AG04450 (cell line): ENCODE measurements at regions of chr12 and their contacts with region 1.

Region 1: DNA sequence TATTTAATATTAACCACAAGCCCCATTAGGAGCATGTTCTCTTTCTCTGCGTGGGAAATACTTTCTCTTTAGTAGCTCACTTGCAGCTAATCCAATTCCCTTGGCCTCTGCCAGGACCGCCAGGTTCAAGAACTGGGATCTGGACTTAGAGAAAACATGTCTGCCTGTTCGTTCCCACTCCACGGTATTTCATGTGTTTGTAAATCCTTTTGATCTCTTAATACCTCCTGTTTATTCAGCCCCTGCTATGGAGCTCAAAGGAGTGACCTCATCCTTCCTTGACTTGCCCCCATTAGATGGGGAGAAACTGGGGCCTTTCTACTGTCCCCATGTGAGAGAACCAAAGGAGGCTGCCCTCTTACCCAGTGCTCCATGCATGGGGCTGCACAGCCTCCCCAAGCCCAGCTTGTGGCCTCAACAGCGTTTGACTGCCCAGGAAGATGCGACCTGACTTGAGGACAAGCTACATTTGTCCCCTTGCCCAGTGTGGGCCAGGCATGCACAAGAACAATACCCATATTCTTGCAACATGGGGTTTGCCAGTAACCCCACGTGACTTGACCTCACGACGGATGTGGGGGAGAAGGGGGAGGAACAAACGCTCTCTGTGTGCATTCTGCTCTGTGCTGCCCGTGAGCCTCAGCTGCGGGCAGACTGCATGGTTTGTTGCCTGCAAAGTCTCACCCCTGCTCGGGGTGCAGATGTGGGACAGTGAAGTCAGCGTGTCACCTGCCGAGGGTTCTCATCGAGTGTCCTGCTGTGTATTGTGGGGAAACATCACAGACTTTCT is 30.3 kb downstream of the CD9 start:
- DNase-seq: no peak
- H3K4me3 ChIP-seq: peak overlapping the region; percentile 17
- H3K27ac ChIP-seq: peak overlapping the region; percentile 94
- H3K27me3 ChIP-seq: no peaks in the 10 kb centered on the region
- CTCF ChIP-seq: no peak

Region 2: DNA sequence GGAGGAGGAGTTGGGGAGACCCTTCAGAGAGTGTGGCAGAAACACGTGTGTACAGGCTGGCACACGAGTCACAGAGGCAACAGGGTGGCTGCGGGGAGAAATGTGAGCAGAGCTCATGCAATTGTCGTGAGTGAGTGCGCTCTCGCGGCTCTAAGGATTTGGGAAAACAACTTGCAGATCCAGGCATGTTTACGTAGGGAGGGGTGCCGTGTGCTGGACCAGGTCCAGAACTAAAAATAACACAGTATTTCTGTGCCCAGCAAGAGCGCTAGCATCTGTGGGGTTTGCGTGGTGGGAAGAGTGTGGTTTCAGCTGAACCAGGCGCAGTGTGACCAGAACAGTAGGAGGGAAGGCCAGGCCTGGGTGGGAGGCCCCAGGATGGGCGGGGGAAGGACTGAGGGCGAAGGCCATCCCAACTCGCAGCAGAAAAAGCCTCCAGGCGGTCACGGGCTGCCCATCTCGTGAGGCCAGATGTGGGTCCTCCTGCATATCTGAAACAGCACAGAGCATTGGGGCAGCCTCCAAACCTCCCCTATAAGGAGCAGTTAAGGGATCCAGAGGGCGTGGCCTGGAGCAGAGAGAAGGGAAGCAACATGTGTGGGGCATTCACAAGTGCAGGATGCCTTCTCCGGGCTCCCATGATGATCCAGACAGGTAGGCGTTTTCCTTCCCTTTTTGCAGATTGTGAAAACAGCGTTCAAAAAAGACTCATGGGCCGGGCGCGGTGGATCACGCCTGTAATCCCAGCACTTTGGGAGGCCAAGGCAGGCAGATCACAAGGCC is 48.2 kb before region 1 on chr12:
- CTCF ChIA-PET with region 1: no interaction called
- POLR2A ChIA-PET with region 1: interaction called, 13 read pairs
- DNase-seq: no peak
- H3K4me3 ChIP-seq: no peak overlapping the region
- H3K27ac ChIP-seq: peak overlapping the region; percentile 80
- H3K27me3 ChIP-seq: no peaks in the 10 kb centered on the region
- CTCF ChIP-seq: no peak

Region 3: GRCh38 chr12:6215932-6216494 is 14.5 kb before region 1 on chr12:
- CTCF ChIA-PET with region 1: interaction called, 14 read pairs
- POLR2A ChIA-PET with region 1: interaction called, 31 read pairs
- DNase-seq: no peak
- H3K4me3 ChIP-seq: no peak overlapping the region
- H3K27ac ChIP-seq: no peak overlapping the region
- H3K27me3 ChIP-seq: no peaks in the 10 kb centered on the region
- CTCF ChIP-seq: no peak

Region 4: GRCh38 chr12:6297170-6297569 is 66.7 kb after region 1 on chr12:
- CTCF ChIA-PET with region 1: no interaction called
- POLR2A ChIA-PET with region 1: interaction called, 10 read pairs
- DNase-seq: no peak
- H3K4me3 ChIP-seq: no peak overlapping the region
- H3K27ac ChIP-seq: no peak overlapping the region
- H3K27me3 ChIP-seq: no peaks in the 10 kb centered on the region
- CTCF ChIP-seq: no peak